Heart left ventricle (tissue), 16 donors: ENCODE measurements at regions of chr3 and their contacts with region 1.

Region 1: GRCh38 chr3:50321336-50322114 is 1.0 kb downstream of the HYAL2 start:
- DNase-seq: peak; percentile 91 to 95 (median 93)
- ATAC-seq: peak; percentile 44 to 82 (median 68)
- H3K4me3 ChIP-seq: peak overlapping the region; percentile 62 to 97 (median 88)
- H3K27ac ChIP-seq: peak overlapping the region; percentile 93 to 99 (median 98)
- H3K4me1 ChIP-seq: peaks cover 5 to 85% (median 61%) of the 10 kb centered on the region in 12 donors
- H3K27me3 ChIP-seq: no peaks in the 10 kb centered on the region
- CTCF ChIP-seq: peak; percentile 27 to 80 (median 60)
- POLR2A ChIP-seq: peak in 1 of 2 donors; percentile 76

Region 2: DNA sequence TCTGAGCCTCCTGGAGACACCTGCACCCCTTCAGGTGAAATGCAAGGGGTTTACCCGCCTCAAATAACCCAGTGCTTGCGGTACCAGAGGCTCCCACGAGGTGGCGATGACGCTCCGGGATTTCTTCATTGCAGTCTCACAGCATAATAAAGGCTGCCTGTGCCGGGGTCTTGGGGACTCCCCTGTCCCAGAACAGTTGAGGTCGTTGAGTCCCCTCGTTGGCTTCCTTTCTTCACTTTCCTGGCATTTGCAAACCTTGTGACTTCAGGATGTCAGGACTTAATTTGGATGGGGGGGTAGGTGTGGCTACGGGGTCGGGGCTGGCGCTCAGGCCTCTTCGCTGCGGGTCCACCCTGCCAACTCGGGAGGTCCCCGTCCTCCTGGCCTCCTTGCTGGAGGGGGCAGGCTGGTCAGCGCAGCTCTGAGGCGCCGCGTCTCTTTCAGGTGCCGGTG is 128.8 kb before region 1 on chr3:
- intact Hi-C with region 1: loop called in 1 of 10 experiments (anchors 5 kb)
- DNase-seq: peak in 4 of 5 donors; percentile 44 to 64 (median 60)
- ATAC-seq: peak in 2 of 4 donors; percentile 17 to 28
- H3K4me3 ChIP-seq: no peak overlapping the region
- H3K27ac ChIP-seq: no peak overlapping the region
- H3K4me1 ChIP-seq: peaks cover 3 to 29% (median 14%) of the 10 kb centered on the region in 12 donors
- H3K27me3 ChIP-seq: peaks cover 12 to 35% (median 21%) of the 10 kb centered on the region in 9 donors
- CTCF ChIP-seq: peak; percentile 82 to 94 (median 88)
- POLR2A ChIP-seq: no peak

Region 3: DNA sequence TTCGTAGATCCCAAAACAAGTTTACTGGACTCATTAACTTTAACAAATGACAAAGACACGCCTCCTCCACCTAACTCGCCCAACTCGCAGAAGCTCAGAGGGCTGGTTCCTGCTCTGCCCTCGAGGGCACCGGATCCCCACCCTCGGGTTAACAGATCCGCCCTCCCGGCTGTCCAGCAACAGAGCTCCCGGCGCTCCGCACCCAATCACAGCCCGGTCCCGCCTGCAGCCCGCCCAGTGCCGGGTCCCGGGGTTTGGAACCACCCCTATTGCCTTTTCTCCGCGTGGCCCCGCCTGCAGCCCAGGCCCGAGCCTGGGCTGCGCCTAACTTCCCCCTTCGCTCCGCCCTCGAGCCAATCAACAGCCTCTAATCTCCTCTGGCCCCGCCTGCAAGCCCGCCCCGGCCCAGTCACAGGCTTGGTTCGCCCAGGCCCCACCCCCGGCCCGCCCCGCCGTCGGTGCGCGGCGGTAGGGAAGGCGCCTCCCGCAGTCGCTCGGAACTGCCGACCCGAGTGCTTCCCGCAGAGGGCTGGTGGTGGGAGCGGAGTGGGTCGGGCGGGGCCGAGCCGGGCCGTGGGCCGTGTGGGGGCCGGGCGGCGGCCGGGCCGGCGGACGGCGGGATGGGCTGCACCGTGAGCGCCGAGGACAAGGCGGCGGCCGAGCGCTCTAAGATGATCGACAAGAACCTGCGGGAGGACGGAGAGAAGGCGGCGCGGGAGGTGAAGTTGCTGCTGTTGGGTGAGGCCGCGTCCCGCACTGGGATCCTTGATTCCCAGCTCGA is 85.6 kb before region 1 on chr3 and contains the start of gene GNAI2:
- intact Hi-C with region 1: loop called in 3 of 10 experiments (anchors 5 kb)
- DNase-seq: peak; percentile 99
- ATAC-seq: peak; percentile 90 to 94 (median 94)
- H3K4me3 ChIP-seq: peak within 1 kb of the TSS; percentile 82 to 100 (median 93)
- H3K27ac ChIP-seq: peak within 1 kb of the TSS; percentile 76 to 99 (median 94)
- H3K4me1 ChIP-seq: peaks cover 5 to 54% (median 38%) of the 10 kb centered on the region in 12 donors
- H3K27me3 ChIP-seq: no peaks in the 10 kb centered on the region
- CTCF ChIP-seq: no peak
- POLR2A ChIP-seq: peak; percentile 95 to 98
- total RNA-seq, gene GNAI2: 106 to 365 (median 140) TPM

Region 4: DNA sequence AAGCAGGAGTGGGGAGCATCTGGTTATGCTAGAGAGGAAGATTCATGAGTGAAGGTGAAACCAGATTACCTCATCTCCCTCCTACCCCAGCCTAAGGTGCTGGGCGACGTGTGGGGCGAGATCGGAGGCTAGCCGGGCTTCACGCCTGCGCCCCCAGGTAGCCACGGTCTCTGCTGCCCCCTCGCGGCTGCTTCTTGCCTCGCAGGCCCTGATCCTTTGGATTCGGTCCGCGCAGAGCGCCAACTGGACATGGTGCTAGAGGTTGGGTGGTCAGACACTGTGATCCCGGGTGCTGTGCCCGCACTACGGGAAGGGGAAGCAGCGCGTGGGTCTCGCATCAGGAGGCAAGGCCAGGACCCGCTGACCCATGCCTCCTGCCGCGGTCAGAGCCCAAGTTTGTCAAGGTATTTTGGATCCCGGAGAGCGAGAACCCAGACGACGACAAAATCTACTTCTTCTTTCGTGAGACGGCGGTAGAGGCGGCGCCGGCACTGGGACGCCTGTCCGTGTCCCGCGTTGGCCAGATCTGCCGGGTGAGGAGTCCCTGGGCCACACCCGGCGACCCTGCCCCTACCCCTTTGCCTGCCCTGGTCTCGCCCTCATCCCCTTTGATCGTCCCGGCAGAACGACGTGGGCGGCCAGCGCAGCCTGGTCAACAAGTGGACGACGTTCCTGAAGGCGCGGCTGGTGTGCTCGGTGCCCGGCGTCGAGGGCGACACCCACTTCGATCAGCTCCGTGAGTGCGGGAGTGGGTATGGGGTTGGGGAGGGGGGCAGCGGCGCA is 48.4 kb before region 1 on chr3:
- intact Hi-C with region 1: loop called in 5 of 10 experiments (anchors 1 to 10 kb)
- DNase-seq: peak; percentile 83 to 94 (median 86)
- ATAC-seq: peak; percentile 39 to 77 (median 61)
- H3K4me3 ChIP-seq: peak overlapping the region in 11 of 12 donors; percentile 19 to 54 (median 39)
- H3K27ac ChIP-seq: peak overlapping the region in 6 of 12 donors; percentile 9 to 51 (median 30)
- H3K4me1 ChIP-seq: peaks cover 0 to 47% (median 26%) of the 10 kb centered on the region in 12 donors
- H3K27me3 ChIP-seq: peaks cover 0 to 38% (median 6%) of the 10 kb centered on the region in 9 donors
- CTCF ChIP-seq: peak; percentile 96 to 99 (median 98)
- POLR2A ChIP-seq: no peak

Region 5: GRCh38 chr3:50304601-50305000 is 16.9 kb before region 1 on chr3:
- intact Hi-C with region 1: loop called in 6 of 10 experiments (anchors 1 to 2 kb)
- DNase-seq: peak in 1 of 5 donors; percentile 18
- ATAC-seq: no peak
- H3K4me3 ChIP-seq: no peak overlapping the region
- H3K27ac ChIP-seq: no peak overlapping the region
- H3K4me1 ChIP-seq: peaks cover 11 to 44% (median 32%) of the 10 kb centered on the region in 12 donors
- H3K27me3 ChIP-seq: no peaks in the 10 kb centered on the region
- CTCF ChIP-seq: no peak
- POLR2A ChIP-seq: no peak